Calu3 (cell line): ENCODE measurements at regions of chr15 and their contacts with region 1.

Region 1: DNA sequence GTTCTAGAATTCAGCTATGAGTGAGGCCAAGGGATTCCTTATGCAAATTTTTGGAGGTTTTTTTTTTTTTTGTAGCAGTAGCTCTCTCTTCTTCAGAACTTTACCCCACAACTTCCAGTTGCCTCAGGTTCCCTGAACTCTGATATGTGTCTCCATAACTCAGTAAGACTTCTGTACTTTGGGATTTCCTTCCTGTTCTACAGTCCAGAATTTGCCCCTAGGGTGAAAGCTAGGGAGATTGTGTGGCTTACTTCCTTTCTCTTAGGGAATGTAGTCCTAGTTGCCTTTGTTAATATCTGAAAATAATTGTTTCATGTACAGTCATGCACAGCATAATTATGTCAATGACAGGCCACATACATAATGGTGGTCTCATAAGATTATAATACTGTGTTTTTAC is 30.8 kb downstream of the LRRC28 start:
- DNase-seq: no peak
- H3K4me3 Mint-ChIP-seq: no peak overlapping the region
- H3K27ac Mint-ChIP-seq: no peak overlapping the region
- H3K4me1 Mint-ChIP-seq: no peaks in the 10 kb centered on the region
- H3K27me3 Mint-ChIP-seq: no peaks in the 10 kb centered on the region
- CTCF ChIP-seq: no peak

Region 2: GRCh38 chr15:99348412-99348811 is 66.3 kb after region 1 on chr15:
- CTCF ChIA-PET with region 1: no interaction called
- intact Hi-C with region 1: no loop called
- DNase-seq: no peak
- H3K4me3 Mint-ChIP-seq: no peak overlapping the region
- H3K27ac Mint-ChIP-seq: no peak overlapping the region
- H3K4me1 Mint-ChIP-seq: no peaks in the 10 kb centered on the region
- H3K27me3 Mint-ChIP-seq: no peaks in the 10 kb centered on the region
- CTCF ChIP-seq: no peak

Region 3: DNA sequence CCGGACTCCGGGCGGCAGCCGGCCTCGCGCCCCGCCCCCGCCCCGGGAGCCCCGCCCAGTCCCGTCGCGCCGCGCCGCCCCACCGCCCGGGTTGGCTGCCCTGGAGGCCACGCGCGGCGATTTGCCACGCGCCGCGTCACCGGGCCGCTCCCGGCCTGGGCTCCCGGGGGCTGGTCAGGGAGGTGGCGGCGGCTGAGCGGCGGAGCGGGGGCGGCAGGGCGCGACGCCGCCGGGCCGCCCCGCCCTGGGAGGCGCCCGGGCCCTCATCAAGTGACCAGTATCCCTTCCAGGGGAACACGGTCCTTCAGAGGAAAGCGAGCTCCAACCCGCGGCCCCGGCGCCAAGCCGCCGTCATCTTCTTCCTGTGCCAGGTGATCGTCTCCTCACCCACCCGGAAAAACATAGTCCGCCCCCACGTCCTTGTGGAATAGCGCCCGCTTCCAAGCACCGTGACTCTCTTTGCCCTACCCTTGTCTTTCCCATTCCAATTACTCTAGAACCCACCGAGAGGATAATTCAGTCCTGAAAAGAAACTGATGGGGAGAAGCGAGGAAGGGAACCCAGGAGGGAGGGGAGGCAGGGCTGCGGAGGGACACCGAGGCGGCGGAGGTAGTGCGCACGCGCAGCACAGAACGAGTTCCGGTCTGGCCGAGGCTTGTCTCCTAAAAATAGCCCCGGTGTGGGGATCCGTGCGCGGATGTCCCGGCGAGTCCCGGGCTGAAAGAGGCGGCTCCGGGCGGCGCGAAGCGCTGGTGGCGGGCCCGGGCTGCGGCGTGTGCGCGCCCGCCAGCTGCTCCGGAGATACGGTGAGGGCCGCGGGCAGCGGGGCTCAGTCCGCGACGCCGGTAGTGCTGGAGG is 283.4 kb after region 1 on chr15 and contains the start of gene MEF2A:
- CTCF ChIA-PET with region 1: no interaction called
- intact Hi-C with region 1: loop called (anchors 5 kb)
- DNase-seq: peak; percentile 97
- H3K4me3 Mint-ChIP-seq: peak within 1 kb of the TSS; percentile 93
- H3K27ac Mint-ChIP-seq: peak within 1 kb of the TSS; percentile 97
- H3K4me1 Mint-ChIP-seq: peaks cover 16% of the 10 kb centered on the region
- H3K27me3 Mint-ChIP-seq: peaks cover 39% of the 10 kb centered on the region
- CTCF ChIP-seq: no peak
- total RNA-seq, gene MEF2A: 33.6 and 35.0 TPM in 2 replicates

Region 4: DNA sequence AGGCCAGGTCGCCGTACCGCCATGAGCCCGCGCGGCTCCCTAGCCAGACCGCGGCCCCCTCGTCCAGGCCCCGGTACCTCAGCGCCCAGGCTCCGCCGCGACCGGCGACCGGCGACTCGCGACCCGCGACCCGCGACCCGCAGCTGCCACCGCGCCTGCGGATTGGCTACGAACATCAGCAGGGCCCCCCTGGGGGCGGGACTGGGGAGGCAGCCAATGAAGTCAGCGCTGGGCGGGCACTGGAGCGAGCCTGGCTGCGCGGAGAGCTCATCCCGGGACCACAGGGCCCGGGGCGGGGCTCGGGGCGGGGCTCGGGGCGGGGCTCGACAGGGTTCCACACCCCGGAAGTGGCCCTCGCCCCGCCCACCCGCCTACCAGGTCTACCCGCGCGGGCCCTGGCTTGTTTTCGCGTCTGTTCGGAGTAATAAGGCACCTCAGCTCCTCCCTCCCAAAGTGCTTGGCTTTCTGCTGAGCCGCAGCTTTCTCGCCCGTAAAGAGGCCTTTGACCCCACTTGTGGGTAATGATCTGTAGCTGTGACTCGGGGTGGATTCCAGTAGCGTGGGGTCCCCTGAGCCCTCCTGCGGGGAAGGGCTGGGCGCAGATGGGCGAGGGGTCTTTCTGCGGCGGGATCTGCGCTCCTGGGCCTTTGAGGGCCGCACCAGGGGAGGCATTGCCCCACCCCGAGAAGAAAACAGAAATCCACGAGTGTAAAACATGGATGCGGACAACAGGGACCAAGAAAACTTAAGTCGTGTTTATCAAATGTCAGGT is 451.3 kb after region 1 on chr15 and contains the start of gene LYSMD4:
- CTCF ChIA-PET with region 1: interaction called, 7 read pairs
- intact Hi-C with region 1: loop called (anchors 1 kb)
- DNase-seq: peak; percentile 99
- H3K4me3 Mint-ChIP-seq: peak within 1 kb of the TSS; percentile 73
- H3K27ac Mint-ChIP-seq: no peak within 1 kb of the TSS
- H3K4me1 Mint-ChIP-seq: peaks cover 7% of the 10 kb centered on the region
- H3K27me3 Mint-ChIP-seq: no peaks in the 10 kb centered on the region
- CTCF ChIP-seq: no peak
- total RNA-seq, gene LYSMD4: 6.6 and 8.2 TPM in 2 replicates

Region 5: GRCh38 chr15:99755692-99756409 is 473.7 kb after region 1 on chr15:
- CTCF ChIA-PET with region 1: no interaction called
- intact Hi-C with region 1: loop called (anchors 2 kb)
- DNase-seq: peak; percentile 56
- H3K4me3 Mint-ChIP-seq: no peak overlapping the region
- H3K27ac Mint-ChIP-seq: no peak overlapping the region
- H3K4me1 Mint-ChIP-seq: no peaks in the 10 kb centered on the region
- H3K27me3 Mint-ChIP-seq: no peaks in the 10 kb centered on the region
- CTCF ChIP-seq: peak; percentile 70